Gastrocnemius medialis (tissue), 4 donors: ENCODE measurements at regions of chr2 and their contacts with region 1.

Region 1: DNA sequence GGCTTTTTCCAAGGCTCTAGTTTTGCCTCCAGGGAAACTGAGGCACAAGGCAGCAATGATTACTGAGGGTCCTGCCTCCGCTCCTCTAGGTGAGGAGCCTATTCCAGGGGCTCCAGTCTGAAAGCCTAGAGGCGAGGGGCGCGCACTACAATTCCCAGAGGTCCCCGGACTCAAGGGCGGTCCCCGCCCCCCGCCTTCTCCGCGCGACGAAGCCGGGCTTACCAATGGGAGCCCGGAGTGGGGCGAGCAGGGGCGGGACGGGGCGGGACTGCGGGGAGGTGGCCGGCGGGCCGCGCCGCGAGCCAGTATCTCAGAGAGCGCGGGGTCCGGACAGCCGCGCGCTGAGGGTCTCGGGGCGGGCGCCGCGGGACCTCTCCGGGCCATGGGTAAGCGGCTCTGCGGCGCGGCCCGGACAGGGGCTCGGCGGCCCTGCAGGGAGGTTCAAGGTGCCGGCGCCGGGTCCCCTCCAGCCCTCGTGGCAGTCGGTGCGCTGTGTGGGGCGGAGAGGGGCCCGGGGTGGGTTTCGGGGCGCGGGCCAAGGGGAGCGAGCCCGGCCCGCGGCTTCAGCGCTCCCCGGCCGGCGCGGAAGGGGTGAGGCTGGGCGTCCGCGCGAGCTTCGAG is at the start of gene ARID5A:
- DNase-seq: peak; percentile 92 to 93
- ATAC-seq: peak; percentile 25 to 39
- H3K4me3 ChIP-seq: peak within 1 kb of the TSS; percentile 68 to 99 (median 83)
- H3K27ac ChIP-seq: peak within 1 kb of the TSS; percentile 94 to 99 (median 97)
- H3K4me1 ChIP-seq: peaks cover 74 to 82% of the 10 kb centered on the region in 2 donors
- H3K27me3 ChIP-seq: no peaks in the 10 kb centered on the region
- CTCF ChIP-seq: peak in 4 of 5 experiments; percentile 51 to 72 (median 66)
- POLR2A ChIP-seq: peak; percentile 99 to 100
- total RNA-seq, gene ARID5A: 6.7 to 126 (median 30.5) TPM

Region 2: DNA sequence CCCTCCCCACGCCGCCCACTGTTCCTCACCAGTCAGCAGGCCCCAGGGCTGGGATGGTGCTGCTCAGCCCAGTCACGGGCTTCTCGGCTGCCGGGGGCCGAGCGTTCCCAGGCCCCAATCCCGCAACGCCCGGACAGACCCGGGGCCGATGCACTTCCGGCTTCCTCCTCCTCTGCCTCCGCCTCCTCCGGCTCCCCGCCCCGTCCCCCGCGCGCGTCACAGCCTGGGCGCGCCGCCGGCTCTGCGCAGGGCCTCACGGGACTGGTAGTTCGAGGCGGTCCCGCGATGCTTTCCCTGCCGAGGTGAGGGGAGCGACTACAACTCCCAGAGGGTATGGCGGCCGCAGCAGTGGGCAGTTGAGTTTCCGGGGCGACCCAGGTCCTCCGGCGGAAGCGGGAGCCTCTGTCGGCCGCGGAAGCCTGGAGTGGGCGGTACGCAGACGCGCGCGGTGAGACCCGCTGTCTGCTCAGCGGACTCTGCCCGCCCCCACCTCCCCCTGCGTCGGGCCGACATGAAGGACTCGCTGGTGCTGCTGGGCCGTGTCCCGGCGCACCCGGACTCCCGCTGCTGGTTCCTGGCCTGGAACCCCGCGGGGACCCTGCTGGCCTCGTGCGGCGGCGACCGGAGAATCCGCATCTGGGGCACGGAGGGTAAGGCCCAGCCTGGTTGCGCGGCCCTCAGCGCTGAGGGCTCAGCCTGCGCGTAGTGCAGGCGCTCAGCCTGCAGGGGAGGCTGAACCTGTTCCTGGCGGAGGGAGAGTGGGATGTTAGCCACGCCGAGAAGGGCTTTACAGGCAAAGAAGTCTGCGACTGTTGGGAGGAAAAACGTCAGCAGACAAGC is 270.5 kb before region 1 on chr2 and contains the starts of genes CIAO1 and TMEM127:
- in situ Hi-C with region 1: no loop called
- intact Hi-C with region 1: loop called (anchors 2 kb)
- DNase-seq: peak; percentile 98 to 99
- ATAC-seq: peak; percentile 87
- H3K4me3 ChIP-seq: peak within 1 kb of the TSS; percentile 84 to 97 (median 90)
- H3K27ac ChIP-seq: peak within 1 kb of the TSS; percentile 94 to 99 (median 96)
- H3K4me1 ChIP-seq: peaks cover 49 to 51% of the 10 kb centered on the region in 2 donors
- H3K27me3 ChIP-seq: no peaks in the 10 kb centered on the region
- CTCF ChIP-seq: peak; percentile 20 to 42 (median 35)
- POLR2A ChIP-seq: peak; percentile 98
- total RNA-seq, gene CIAO1: 73.5 to 102 (median 95.6) TPM
- total RNA-seq, gene TMEM127: 27.1 to 38.8 (median 30.9) TPM

Region 3: DNA sequence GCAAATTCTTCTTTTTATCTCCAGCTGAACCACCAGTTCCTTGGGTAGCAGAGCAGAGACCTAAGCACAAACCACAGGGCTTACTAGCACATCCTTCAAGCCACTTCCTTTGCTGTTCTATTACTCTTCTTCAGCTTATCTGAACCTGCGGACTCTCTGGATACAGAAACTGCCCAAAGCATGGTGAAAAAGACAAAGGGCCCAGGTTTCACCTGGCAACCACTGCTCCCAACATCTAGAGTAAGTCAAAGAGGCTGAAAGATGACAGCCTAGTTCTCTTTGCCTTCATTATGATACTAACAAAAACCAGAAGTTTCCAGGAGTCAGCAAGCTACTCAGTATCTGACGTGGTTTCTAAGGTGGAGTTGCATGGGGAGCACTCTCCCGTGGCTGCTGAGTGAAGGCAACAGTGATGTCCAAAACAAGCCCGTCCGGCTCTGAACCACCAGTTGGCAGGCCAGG is 58.2 kb after region 1 on chr2:
- in situ Hi-C with region 1: no loop called
- intact Hi-C with region 1: loop called (anchors 5 kb)
- DNase-seq: no peak
- ATAC-seq: no peak
- H3K4me3 ChIP-seq: no peak overlapping the region
- H3K27ac ChIP-seq: peak overlapping the region in 1 of 4 donors; percentile 91
- H3K4me1 ChIP-seq: peaks cover 41 to 55% of the 10 kb centered on the region in 2 donors
- H3K27me3 ChIP-seq: no peaks in the 10 kb centered on the region
- CTCF ChIP-seq: no peak
- POLR2A ChIP-seq: no peak

Region 4: GRCh38 chr2:96760036-96760985 is 223.8 kb after region 1 on chr2 and contains the start of gene CNNM4:
- in situ Hi-C with region 1: no loop called
- intact Hi-C with region 1: loop called (anchors 5 kb)
- DNase-seq: peak; percentile 89 to 93
- ATAC-seq: peak; percentile 80 to 87
- H3K4me3 ChIP-seq: peak within 1 kb of the TSS; percentile 64 to 87 (median 74)
- H3K27ac ChIP-seq: peak within 1 kb of the TSS; percentile 83 to 91 (median 88)
- H3K4me1 ChIP-seq: peaks cover 39 to 41% of the 10 kb centered on the region in 2 donors
- H3K27me3 ChIP-seq: no peaks in the 10 kb centered on the region
- CTCF ChIP-seq: peak in 1 of 5 experiments; percentile 36
- POLR2A ChIP-seq: peak; percentile 84 to 90
- total RNA-seq, gene CNNM4: 5.4 to 20.1 (median 9.1) TPM

Region 5: GRCh38 chr2:96913398-96914202 is 377.0 kb after region 1 on chr2:
- in situ Hi-C with region 1: no loop called
- intact Hi-C with region 1: no loop called
- DNase-seq: no peak
- ATAC-seq: no peak
- H3K4me3 ChIP-seq: no peak overlapping the region
- H3K27ac ChIP-seq: peak overlapping the region in 1 of 4 donors; percentile 36
- H3K4me1 ChIP-seq: peaks cover 0 to 5% of the 10 kb centered on the region in 2 donors
- H3K27me3 ChIP-seq: no peaks in the 10 kb centered on the region
- CTCF ChIP-seq: no peak
- POLR2A ChIP-seq: no peak

Region 6: DNA sequence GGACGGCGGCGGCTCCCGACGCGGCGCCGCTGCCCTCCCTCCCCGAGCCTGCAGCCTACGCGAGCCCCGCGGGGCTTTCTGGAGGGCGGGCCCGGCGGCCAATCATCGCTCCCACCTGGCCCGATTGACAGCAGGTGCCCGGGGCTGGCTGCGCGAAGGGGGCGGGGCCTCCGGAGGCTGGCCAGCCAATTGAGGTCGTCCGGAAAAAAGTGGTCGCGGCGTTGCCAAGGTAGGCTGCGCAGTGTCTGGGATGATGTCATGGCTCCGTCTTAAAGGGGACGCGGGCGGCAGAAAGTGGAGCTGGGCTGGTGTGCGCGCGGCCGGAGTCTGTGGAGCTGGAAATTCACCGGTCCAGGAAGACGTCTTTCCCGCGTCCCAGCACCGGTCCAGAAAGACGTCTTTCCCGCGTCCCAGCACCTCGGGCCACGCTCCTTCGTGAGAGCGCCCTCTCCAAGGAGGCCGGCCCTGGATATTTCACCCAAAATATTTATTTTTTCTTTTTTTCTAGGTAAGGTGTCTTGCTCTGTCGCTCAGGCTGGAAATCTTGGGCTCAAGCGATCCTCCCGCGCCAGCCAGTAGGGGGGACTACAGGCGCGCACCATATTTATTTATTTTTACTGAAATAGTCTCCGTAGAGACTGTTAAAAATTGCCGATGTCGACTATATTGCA is 1127.5 kb after region 1 on chr2 and contains the start of gene ACTR1B:
- in situ Hi-C with region 1: loop called in 1 of 4 experiments (anchors 25 kb)
- intact Hi-C with region 1: no loop called
- DNase-seq: peak; percentile 97 to 98
- ATAC-seq: peak; percentile 95 to 96
- H3K4me3 ChIP-seq: peak within 1 kb of the TSS; percentile 59 to 94 (median 82)
- H3K27ac ChIP-seq: peak within 1 kb of the TSS; percentile 86 to 98 (median 92)
- H3K4me1 ChIP-seq: peaks cover 23 to 29% of the 10 kb centered on the region in 2 donors
- H3K27me3 ChIP-seq: no peaks in the 10 kb centered on the region
- CTCF ChIP-seq: peak; percentile 55 to 73 (median 67)
- POLR2A ChIP-seq: peak; percentile 75 to 93
- total RNA-seq, gene ACTR1B: 53.5 to 76.1 (median 56.5) TPM